BJ (cell line): ENCODE measurements at regions of chr3 and their contacts with region 1.

Region 1: GRCh38 chr3:71102111-71102983 is 481.2 kb downstream of the FOXP1 start:
- DNase-seq: peak; percentile 96
- H3K4me3 ChIP-seq: no peak overlapping the region
- H3K27me3 ChIP-seq: no peaks in the 10 kb centered on the region
- CTCF ChIP-seq: no peak

Region 2: DNA sequence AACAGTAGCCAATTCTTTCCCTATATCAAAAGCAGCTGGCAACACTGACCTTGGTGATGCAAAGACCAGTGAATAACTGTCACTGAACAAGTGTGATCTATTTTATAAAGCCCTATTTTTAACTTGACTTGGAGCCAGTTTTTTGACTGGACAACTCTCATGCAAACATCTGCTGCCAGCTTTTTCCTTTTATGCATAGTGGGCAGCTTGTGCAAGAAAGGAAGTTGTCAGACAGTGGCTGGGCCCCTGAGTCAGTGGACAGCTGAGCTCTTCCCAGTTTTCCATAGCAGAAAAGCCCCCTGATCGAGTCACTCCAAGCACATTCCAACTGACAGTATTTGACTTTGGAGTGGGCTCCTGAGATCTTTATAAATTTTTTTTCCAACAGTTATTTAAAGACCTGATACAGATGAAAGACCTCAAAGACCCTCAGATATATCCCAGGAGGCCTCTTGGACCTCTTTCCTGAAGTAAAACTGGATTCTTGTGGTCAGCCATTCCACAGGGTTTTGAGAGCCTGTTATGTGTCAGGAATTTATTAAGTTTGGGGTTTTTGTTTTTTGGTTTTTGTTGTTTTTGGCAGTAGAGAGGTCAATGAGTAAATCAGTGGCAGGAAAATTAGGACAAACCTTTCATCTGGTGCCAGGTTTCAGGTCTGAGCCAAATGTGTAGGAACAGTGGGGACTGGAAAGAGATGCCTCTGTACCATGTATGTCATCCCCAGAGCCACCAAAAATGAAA is 269.7 kb before region 1 on chr3:
- CTCF ChIA-PET with region 1: no interaction called
- POLR2A ChIA-PET with region 1: interaction called, 11 read pairs
- DNase-seq: peak; percentile 75
- H3K4me3 ChIP-seq: no peak overlapping the region
- H3K27me3 ChIP-seq: no peaks in the 10 kb centered on the region
- CTCF ChIP-seq: no peak

Region 3: DNA sequence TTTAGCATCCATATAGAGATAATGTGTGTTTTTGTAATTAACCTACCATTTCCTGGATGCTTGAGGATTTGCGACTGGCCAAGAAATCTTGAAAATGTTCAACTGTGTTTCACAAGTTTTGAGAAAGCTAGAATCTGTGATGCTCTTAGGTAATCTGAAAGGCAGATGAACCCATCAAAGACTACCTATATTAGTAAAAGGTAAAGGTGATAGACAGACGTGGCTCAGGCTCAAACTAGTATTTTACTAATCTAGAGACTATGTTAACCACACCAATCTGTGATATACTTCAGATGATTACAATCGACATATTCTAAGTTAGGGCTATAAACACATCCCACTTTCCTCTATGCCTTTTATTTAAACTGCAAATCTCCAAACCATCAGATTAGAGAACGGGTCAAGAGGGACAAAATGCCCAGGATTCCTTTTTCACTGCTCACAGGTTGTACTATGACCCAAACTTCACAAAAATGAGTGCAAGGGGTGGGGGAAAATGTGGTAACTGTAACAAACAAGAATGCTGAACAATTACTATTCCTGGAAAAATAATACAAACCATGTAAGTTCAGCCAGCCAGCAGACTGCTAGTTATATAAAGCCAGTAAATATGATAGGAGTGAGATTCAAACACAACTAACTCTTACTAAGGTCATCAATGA is 186.1 kb after region 1 on chr3:
- CTCF ChIA-PET with region 1: no interaction called
- POLR2A ChIA-PET with region 1: no interaction called
- DNase-seq: no peak
- H3K4me3 ChIP-seq: no peak overlapping the region
- H3K27me3 ChIP-seq: no peaks in the 10 kb centered on the region
- CTCF ChIP-seq: no peak